Gastrocnemius medialis (tissue), 4 donors: ENCODE measurements at regions of chrX and their contacts with region 1.

Region 1: GRCh38 chrX:154478728-154479622 is at the start of gene LAGE3:
- DNase-seq: peak; percentile 82 to 91
- ATAC-seq: peak; percentile 89 to 93
- H3K4me3 ChIP-seq: peak within 1 kb of the TSS; percentile 58 to 70 (median 62)
- H3K27ac ChIP-seq: peak within 1 kb of the TSS; percentile 88 to 94 (median 92)
- H3K4me1 ChIP-seq: peaks cover 3 to 8% of the 10 kb centered on the region in 2 donors
- H3K27me3 ChIP-seq: no peaks in the 10 kb centered on the region
- CTCF ChIP-seq: no peak
- POLR2A ChIP-seq: peak; percentile 66 to 67
- total RNA-seq, gene LAGE3: 26.0 to 72.5 (median 29.3) TPM

Region 2: GRCh38 chrX:154428176-154429010 is 50.6 kb before region 1 on chrX and contains the start of gene ATP6AP1:
- in situ Hi-C with region 1: no loop called
- intact Hi-C with region 1: no loop called
- DNase-seq: peak; percentile 89 to 93
- ATAC-seq: peak; percentile 96 to 97
- H3K4me3 ChIP-seq: peak within 1 kb of the TSS; percentile 67 to 82 (median 74)
- H3K27ac ChIP-seq: peak within 1 kb of the TSS; percentile 74 to 91 (median 89)
- H3K4me1 ChIP-seq: peaks cover 3 to 7% of the 10 kb centered on the region in 2 donors
- H3K27me3 ChIP-seq: no peaks in the 10 kb centered on the region
- CTCF ChIP-seq: no peak
- POLR2A ChIP-seq: peak; percentile 61 to 64
- total RNA-seq, gene ATP6AP1: 16.7 to 37.8 (median 26.2) TPM

Region 3: DNA sequence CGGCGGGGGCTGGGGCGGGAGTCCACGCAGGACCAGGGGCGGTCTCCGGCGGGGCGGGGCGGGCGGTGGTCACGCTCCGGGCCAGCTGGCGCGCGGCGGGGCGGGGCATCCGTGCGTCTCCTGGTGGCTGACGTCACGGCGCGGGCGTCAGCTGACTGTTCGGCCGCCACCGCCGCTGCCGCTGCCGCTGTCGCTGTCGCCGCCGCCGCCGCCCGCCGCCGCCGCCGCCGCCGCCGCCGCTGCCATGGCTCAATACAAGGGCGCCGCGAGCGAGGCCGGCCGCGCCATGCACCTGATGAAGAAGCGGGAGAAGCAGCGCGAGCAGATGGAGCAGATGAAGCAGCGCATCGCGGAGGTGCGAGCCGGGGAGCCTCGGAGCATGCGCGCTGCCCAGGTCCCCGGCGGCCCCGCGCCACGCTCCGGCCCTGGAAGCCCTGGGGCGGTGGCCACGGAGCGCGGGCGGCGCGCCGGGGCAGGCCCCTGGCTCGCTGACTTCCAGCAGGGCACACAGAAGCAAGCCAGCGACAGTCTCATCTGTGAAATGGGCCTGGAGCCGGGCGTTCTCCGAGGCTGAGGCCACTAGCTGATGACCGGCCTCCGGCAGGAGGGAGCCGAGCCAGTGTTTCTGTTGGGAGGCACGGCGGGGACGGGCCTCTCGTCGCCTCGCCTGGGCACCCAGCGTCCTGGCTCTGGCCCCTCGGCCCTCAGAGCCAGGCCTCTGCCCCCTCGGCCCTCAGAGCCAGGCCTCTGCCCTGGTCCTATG is 34.8 kb before region 1 on chrX and contains the start of gene FAM50A:
- in situ Hi-C with region 1: no loop called
- intact Hi-C with region 1: loop called (anchors 1 kb)
- DNase-seq: peak; percentile 72 to 78
- ATAC-seq: peak; percentile 91 to 92
- H3K4me3 ChIP-seq: peak within 1 kb of the TSS; percentile 58 to 64 (median 62)
- H3K27ac ChIP-seq: peak within 1 kb of the TSS; percentile 84 to 94 (median 91)
- H3K4me1 ChIP-seq: peaks cover 4 to 8% of the 10 kb centered on the region in 2 donors
- H3K27me3 ChIP-seq: no peaks in the 10 kb centered on the region
- CTCF ChIP-seq: no peak
- POLR2A ChIP-seq: peak; percentile 80 to 88
- total RNA-seq, gene FAM50A: 30.9 to 55.4 (median 45.3) TPM

Region 4: DNA sequence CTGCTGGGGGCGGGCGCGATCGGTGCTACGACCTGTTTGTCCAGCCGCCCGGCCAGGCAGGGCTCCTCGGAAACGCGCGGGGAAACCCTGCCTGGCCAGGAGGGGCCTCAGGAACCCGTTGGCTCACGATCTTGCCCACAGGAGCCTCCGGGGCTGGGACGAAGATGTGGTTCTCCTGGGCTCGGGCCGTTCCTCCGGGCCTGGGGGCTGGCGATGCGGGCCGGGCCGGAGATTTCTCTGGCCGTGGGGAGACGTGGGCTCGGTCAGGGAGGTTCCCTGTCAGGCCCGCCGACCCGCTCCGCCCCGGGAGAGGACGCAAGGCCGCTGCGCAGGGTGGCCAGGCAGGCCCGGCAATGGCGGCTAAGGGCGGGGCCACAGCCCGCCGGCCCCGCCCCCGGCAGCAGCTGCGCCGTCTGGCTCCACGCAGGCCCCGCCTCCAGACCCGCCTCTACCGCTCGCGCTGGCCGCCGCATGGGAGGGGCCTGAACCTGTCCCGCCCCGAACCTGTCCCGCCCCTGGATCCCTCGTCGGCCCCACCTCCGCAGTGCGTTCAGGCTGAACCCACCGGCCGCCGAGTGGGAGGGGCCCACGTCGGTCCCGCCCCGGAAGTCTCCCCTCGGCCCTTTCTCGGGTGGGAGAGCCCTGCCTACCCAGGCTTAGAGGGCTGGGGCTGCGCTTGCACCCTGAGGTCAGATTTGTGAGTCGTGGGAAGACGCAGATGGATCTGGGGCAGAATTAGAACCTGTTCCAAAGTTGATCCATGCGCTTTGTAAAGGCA is 37.1 kb after region 1 on chrX and contains the start of gene FAM3A:
- in situ Hi-C with region 1: no loop called
- intact Hi-C with region 1: loop called (anchors 2 kb)
- DNase-seq: peak; percentile 93
- ATAC-seq: peak; percentile 86 to 92
- H3K4me3 ChIP-seq: peak within 1 kb of the TSS; percentile 68 to 89 (median 72)
- H3K27ac ChIP-seq: peak within 1 kb of the TSS; percentile 88 to 96 (median 95)
- H3K4me1 ChIP-seq: peaks cover 0 to 12% of the 10 kb centered on the region in 2 donors
- H3K27me3 ChIP-seq: no peaks in the 10 kb centered on the region
- CTCF ChIP-seq: no peak
- POLR2A ChIP-seq: peak; percentile 88 to 89
- total RNA-seq, gene FAM3A: 28.3 to 44.5 (median 37.8) TPM

Region 5: GRCh38 chrX:155046129-155046810 is 567.3 kb after region 1 on chrX:
- in situ Hi-C with region 1: no loop called
- intact Hi-C with region 1: no loop called
- DNase-seq: no peak
- ATAC-seq: peak; percentile 62 to 68
- H3K4me3 ChIP-seq: no peak overlapping the region
- H3K27ac ChIP-seq: peak overlapping the region; percentile 67 to 78 (median 76)
- H3K4me1 ChIP-seq: peaks cover 14 to 29% of the 10 kb centered on the region in 2 donors
- H3K27me3 ChIP-seq: no peaks in the 10 kb centered on the region
- CTCF ChIP-seq: no peak
- POLR2A ChIP-seq: peak in 1 of 2 donors; percentile 36